OCI-LY7 (cell line): ENCODE measurements at regions of chr1 and their contacts with region 1.

Region 1: GRCh38 chr1:154272217-154272998 is at the start of gene HAX1:
- DNase-seq: peak; percentile 98
- H3K4me3 ChIP-seq: peak within 1 kb of the TSS; percentile 92
- H3K27ac ChIP-seq: peak within 1 kb of the TSS; percentile 74
- H3K4me1 ChIP-seq: peaks cover 21% of the 10 kb centered on the region
- CTCF ChIP-seq: peak; percentile 94
- total RNA-seq, gene HAX1: 196 and 208 TPM in 2 replicates

Region 2: GRCh38 chr1:154183045-154183915 is 89.1 kb before region 1 on chr1:
- CTCF ChIA-PET with region 1: no interaction called
- POLR2A ChIA-PET with region 1: interaction called, 3 read pairs
- intact Hi-C with region 1: loop called (anchors 1 kb)
- DNase-seq: peak; percentile 94
- H3K4me3 ChIP-seq: peak overlapping the region; percentile 86
- H3K27ac ChIP-seq: peak overlapping the region; percentile 83
- H3K4me1 ChIP-seq: peaks cover 33% of the 10 kb centered on the region
- CTCF ChIP-seq: no peak

Region 3: DNA sequence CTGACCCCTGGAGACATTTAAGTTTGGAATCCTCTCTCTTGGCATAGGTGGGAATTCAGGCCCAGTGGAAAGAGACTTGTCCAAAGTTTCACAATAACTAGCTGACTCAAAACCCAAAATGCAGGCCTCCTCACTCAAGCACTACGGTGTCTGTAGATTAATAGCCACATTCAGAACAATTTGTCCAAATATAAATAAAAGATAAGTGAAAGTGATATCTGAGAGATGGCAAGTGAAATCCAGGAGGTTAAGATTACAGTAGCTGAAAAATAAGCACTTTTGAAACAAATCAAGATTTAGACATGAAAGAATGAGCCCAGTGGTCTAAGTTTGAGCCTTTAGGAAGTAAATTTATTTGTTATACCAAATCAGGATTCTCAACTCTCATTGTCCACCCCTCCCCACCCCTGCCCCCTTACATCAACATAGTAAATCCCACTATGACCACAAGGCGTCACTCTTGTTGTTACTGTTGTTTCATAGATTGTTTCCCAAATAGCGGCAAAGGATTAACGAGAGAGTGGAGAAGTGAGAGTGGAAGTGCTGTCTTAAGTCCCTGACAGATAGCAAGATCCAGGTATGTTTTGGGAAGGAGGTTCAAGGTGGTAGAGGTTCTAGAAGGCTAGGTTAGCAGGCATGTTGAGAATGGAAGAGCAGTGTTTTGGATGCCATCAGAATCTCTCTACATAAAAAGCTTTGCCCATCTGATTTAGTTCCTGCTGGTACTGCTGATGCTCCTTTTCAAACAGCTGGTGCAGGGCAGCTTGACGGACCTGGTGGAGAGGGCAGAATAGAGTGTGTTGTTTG is 73.4 kb before region 1 on chr1:
- CTCF ChIA-PET with region 1: interaction called, 4 read pairs
- POLR2A ChIA-PET with region 1: interaction called, 5 read pairs
- intact Hi-C with region 1: loop called (anchors 1 kb)
- DNase-seq: peak; percentile 71
- H3K4me3 ChIP-seq: no peak overlapping the region
- H3K27ac ChIP-seq: no peak overlapping the region
- H3K4me1 ChIP-seq: no peaks in the 10 kb centered on the region
- CTCF ChIP-seq: peak; percentile 86

Region 4: DNA sequence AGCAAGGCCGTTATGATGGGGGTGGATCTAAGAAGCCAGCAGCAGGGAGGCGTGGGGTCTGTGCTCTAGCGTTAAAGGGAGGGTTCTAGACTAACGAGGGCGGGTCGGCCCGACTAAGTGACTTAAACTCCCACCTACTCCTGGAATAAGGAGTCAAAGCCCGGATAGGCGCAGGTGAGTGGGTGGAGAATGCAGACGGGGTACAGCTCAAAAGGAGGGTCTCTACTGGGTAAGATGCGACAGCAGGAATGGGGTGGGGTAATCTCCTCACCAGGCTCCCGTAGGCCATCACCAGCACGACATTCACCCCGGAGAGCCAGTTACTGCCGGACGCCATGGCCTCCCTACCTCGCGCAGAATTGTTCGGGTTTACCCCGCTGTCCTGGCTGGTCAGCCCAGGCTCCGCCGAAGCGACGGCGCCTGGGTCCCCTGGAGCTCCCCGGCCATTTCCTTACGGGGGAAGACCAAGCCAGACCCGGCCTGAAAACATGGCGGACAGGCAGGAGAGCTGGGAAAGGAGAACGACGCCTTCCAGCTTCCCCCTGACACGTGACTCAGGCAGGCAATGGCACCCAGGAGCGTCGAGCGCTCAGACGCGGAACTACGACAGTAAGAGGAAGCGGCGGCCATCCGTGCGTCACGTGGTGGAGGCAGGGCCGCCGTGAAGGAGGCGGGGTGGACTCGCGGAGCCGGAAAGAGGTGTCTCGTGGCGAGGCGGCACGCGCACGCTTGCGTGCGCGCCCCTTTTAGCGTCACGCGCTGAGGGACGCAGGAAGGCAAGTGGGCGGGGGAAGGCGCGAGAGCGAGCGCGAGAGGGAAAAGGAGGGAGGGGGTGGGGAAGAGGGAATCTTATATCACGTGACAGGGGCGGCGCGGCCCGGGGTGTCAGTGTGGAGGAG is 52.1 kb before region 1 on chr1 and contains the start of gene UBAP2L:
- CTCF ChIA-PET with region 1: interaction called, 3 read pairs
- POLR2A ChIA-PET with region 1: interaction called, 4 read pairs
- intact Hi-C with region 1: loop called (anchors 1 kb)
- DNase-seq: peak; percentile 100
- H3K4me3 ChIP-seq: peak within 1 kb of the TSS; percentile 96
- H3K27ac ChIP-seq: peak within 1 kb of the TSS; percentile 75
- H3K4me1 ChIP-seq: peaks cover 41% of the 10 kb centered on the region
- CTCF ChIP-seq: no peak
- total RNA-seq, gene UBAP2L: 80.4 and 98.6 TPM in 2 replicates